Panc1 (cell line): ENCODE measurements at regions of chr5 and their contacts with region 1.

Region 1: GRCh38 chr5:98917433-98917832 is 11.4 kb downstream of the CHD1 start:
- DNase-seq: no peak
- ATAC-seq: no peak
- H3K4me3 ChIP-seq: no peak overlapping the region
- H3K27ac ChIP-seq: no peak overlapping the region
- H3K4me1 ChIP-seq: no peaks in the 10 kb centered on the region
- H3K27me3 ChIP-seq: no peaks in the 10 kb centered on the region
- CTCF ChIP-seq: no peak

Region 2: GRCh38 chr5:98898743-98899142 is 18.7 kb before region 1 on chr5:
- CTCF ChIA-PET with region 1: no interaction called
- POLR2A ChIA-PET with region 1: no interaction called
- in situ Hi-C with region 1: no loop called
- intact Hi-C with region 1: no loop called
- DNase-seq: no peak
- ATAC-seq: no peak
- H3K4me3 ChIP-seq: no peak overlapping the region
- H3K27ac ChIP-seq: no peak overlapping the region
- H3K4me1 ChIP-seq: no peaks in the 10 kb centered on the region
- H3K27me3 ChIP-seq: no peaks in the 10 kb centered on the region
- CTCF ChIP-seq: no peak

Region 3: DNA sequence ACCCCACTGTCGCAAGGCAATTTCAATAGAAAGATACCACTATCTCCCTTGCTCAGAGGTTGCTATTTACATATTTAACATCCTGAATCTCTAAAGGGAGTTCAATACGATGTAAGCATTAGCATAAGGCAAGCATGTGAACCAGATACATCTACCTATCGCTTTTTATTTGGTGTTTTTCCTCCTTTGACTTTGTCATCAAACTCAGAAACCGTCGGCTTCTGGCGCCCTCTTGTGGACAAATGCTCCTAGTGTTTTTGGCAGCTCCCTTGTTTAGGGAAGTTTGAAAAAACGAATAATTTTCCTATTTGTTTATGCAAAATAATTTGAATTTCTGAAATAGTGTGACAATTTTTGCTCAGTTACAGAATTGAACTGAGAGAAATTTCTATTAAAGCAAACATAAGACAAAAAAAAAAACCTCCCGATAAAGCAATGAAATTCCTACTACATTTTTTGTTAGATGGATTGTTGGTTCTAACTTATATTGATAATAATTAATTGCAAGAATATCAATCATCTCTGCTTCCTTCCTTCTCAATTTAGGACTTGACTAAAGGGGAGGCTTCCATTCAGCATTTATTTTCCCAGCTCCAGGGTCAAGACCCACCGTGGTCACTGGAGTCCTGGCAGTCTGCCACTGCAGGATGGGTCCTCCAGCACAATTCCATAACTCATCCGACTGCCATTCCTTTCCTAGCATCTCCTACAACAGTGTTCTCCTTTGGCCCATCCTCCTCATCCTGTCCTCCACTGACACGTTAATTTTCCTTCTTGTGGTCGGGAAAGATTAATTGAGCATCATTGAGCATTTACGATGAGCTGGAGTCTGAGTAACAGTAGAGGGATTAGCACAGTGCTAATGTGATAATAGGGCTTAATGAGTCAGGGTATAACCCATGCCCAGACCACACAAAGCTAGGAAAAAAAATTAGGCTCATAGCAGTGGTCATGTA is 143.2 kb after region 1 on chr5:
- CTCF ChIA-PET with region 1: no interaction called
- POLR2A ChIA-PET with region 1: interaction called, 16 read pairs
- in situ Hi-C with region 1: no loop called
- intact Hi-C with region 1: no loop called
- DNase-seq: peak; percentile 51
- ATAC-seq: no peak
- H3K4me3 ChIP-seq: no peak overlapping the region
- H3K27ac ChIP-seq: no peak overlapping the region
- H3K4me1 ChIP-seq: no peaks in the 10 kb centered on the region
- H3K27me3 ChIP-seq: no peaks in the 10 kb centered on the region; the same call in 1 of the 2 replicates
- CTCF ChIP-seq: peak; percentile 85